IMR-90 (cell line): ENCODE measurements at regions of chr20 and their contacts with region 1.

Region 1: GRCh38 chr20:3786665-3787323 is at the start of gene CENPB:
- DNase-seq: peak; percentile 76
- ATAC-seq: peak; percentile 92
- H3K4me3 ChIP-seq: peak within 1 kb of the TSS; percentile 96
- H3K27ac ChIP-seq: peak within 1 kb of the TSS; percentile 92
- H3K4me1 ChIP-seq: peaks cover 16% of the 10 kb centered on the region
- H3K27me3 ChIP-seq: no peaks in the 10 kb centered on the region
- CTCF ChIP-seq: peak; percentile 88
- POLR2A ChIP-seq: no peak
- RAD21 ChIP-seq: peak; percentile 81
- total RNA-seq, gene CENPB: 59.1 and 72.2 TPM in 2 replicates

Region 2: GRCh38 chr20:3330046-3330741 is 456.6 kb before region 1 on chr20:
- CTCF ChIA-PET with region 1: no interaction called
- POLR2A ChIA-PET with region 1: no interaction called
- dilution Hi-C with region 1: no loop called
- in situ Hi-C with region 1: no loop called
- intact Hi-C with region 1: no loop called
- DNase-seq: peak; percentile 59
- ATAC-seq: peak; percentile 72; the same call in 1 of the 2 replicates
- H3K4me3 ChIP-seq: no peak overlapping the region
- H3K27ac ChIP-seq: no peak overlapping the region
- H3K4me1 ChIP-seq: no peaks in the 10 kb centered on the region
- H3K27me3 ChIP-seq: no peaks in the 10 kb centered on the region
- CTCF ChIP-seq: 0 out of 2 replicates have a peak, but pooled peaks have one; percentile 11
- POLR2A ChIP-seq: no peak
- RAD21 ChIP-seq: no peak

Region 3: DNA sequence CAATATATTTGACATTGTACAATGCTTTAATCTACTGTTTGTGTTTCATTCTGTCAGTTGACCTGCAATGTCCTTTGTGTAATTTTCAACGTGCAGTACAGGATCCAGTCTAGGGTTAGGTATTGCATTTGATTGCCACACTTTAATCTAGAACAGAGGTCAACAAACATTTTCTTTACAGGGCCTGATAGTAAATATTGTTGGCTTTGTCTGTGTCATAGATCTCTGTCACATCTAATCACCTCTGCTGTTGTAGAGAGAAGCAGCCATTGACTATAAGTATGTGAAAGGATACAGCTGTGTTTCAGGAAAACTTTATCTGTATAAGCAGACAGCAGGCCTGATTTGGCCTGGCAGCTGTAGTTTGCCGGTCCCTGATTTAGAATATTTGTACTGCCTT is 276.7 kb before region 1 on chr20:
- CTCF ChIA-PET with region 1: no interaction called
- POLR2A ChIA-PET with region 1: no interaction called
- dilution Hi-C with region 1: no loop called
- in situ Hi-C with region 1: no loop called
- intact Hi-C with region 1: no loop called
- DNase-seq: no peak
- ATAC-seq: no peak
- H3K4me3 ChIP-seq: no peak overlapping the region
- H3K27ac ChIP-seq: no peak overlapping the region
- H3K4me1 ChIP-seq: peaks cover 5% of the 10 kb centered on the region
- H3K27me3 ChIP-seq: no peaks in the 10 kb centered on the region
- CTCF ChIP-seq: no peak
- POLR2A ChIP-seq: no peak
- RAD21 ChIP-seq: no peak

Region 4: DNA sequence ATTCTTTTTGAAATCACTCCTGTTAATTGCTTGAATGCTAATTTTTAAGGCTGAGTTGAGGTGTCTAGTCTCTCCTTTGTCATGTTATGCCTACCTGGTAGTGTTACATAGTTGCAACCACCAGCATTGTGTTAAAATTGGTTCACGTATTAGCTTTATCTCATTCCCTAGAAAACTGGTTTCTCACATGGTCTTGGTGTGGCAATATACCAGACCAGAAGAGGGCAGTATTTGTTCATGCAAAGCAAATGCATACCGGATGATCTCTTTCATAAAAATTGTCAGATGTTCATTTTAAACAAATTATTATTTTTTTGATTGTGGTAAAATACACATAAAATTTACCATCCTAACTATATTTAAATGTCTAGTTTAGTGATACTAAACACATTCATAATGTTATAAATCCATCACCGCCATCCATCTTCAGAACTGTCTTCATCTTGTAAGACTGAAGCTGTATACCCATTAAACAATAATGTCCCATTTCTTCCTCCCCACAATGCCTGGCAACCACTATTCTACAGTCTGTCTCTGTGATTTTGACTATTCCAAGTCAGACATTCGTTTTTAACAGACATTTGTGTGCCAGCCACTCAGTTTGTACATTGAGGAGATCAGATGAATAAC is 223.1 kb before region 1 on chr20:
- CTCF ChIA-PET with region 1: no interaction called
- POLR2A ChIA-PET with region 1: no interaction called
- dilution Hi-C with region 1: no loop called
- in situ Hi-C with region 1: no loop called
- intact Hi-C with region 1: loop called (anchors 5 kb)
- DNase-seq: peak; percentile 69
- ATAC-seq: peak; percentile 89
- H3K4me3 ChIP-seq: no peak overlapping the region
- H3K27ac ChIP-seq: no peak overlapping the region
- H3K4me1 ChIP-seq: no peaks in the 10 kb centered on the region
- H3K27me3 ChIP-seq: no peaks in the 10 kb centered on the region
- CTCF ChIP-seq: peak; percentile 80
- POLR2A ChIP-seq: no peak
- RAD21 ChIP-seq: peak; percentile 78

Region 5: DNA sequence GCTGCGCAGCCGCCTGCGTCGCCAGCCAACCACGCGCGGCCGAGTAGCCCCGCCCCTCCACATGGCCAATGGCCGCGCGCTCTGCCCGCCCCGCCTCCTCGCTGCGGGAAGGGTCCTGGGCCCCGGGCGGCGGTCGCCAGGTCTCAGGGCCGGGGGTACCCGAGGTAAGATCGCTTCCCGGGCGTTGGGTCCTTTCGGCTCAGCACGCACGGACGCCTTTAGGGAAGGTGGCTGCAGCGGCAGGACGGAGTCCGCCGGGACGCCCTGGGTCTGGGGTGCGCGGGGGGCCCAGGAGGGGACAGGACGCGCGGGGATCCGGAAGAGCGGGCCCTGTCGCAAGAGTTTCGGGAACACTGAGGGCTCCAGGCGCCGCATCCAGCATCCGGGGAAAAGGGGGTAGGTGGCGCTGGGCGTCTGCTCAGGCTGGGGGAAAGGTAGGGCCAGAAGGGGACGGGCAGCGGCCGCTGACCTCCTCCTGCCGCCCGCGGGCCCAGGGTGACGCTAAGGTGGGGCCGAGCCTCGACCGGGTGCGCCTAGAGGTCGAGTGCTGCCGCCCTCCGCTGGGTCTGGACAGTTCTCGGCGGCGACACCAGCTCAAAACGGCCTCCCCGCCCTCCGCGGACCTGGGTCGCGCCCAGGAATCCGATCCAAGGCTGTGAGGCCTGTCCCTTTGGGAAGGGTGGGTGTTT is 60.1 kb after region 1 on chr20 and contains the start of gene MAVS:
- CTCF ChIA-PET with region 1: interaction called, 3 read pairs
- POLR2A ChIA-PET with region 1: interaction called, 3 read pairs
- dilution Hi-C with region 1: no loop called
- in situ Hi-C with region 1: no loop called
- intact Hi-C with region 1: loop called (anchors 2 kb)
- DNase-seq: peak; percentile 70
- ATAC-seq: peak; percentile 96
- H3K4me3 ChIP-seq: peak within 1 kb of the TSS; percentile 82
- H3K27ac ChIP-seq: peak within 1 kb of the TSS; percentile 83
- H3K4me1 ChIP-seq: peaks cover 8% of the 10 kb centered on the region
- H3K27me3 ChIP-seq: no peaks in the 10 kb centered on the region
- CTCF ChIP-seq: no peak
- POLR2A ChIP-seq: peak; percentile 82
- RAD21 ChIP-seq: no peak
- total RNA-seq, gene MAVS: 10.3 and 10.4 TPM in 2 replicates

Region 6: DNA sequence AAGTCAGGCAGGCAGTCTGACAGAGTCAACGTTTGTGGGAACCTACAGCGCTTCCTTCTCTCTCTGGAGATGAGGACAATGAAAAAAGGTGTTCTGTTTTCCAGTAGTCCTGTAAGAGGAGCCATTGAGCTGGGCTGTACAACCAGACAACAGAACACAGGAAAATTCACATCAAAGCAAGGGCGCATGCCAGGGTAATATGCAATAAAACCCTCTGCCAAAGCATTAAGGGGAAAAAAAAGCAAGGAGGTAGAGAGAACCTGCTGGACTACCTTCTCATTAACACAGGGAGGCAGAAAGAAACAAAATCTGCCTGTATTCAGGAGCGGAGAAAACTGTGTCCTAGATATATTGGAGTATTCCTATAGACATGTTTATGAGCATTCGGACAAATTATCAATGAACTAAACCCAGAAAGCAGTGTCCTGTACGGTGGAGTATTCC is 227.3 kb after region 1 on chr20:
- CTCF ChIA-PET with region 1: no interaction called
- POLR2A ChIA-PET with region 1: no interaction called
- dilution Hi-C with region 1: no loop called
- in situ Hi-C with region 1: no loop called
- intact Hi-C with region 1: loop called (anchors 2 kb)
- DNase-seq: peak; percentile 85
- ATAC-seq: peak; percentile 22
- H3K4me3 ChIP-seq: peak overlapping the region; percentile 99
- H3K27ac ChIP-seq: peak overlapping the region; percentile 61; the same call in 1 of the 2 replicates
- H3K4me1 ChIP-seq: peaks cover 13% of the 10 kb centered on the region
- H3K27me3 ChIP-seq: no peaks in the 10 kb centered on the region
- CTCF ChIP-seq: peak; percentile 79
- POLR2A ChIP-seq: 0 out of 2 replicates have a peak, but pooled peaks have one; percentile 28
- RAD21 ChIP-seq: peak; percentile 82

Region 7: GRCh38 chr20:4082406-4083097 is 295.8 kb after region 1 on chr20:
- CTCF ChIA-PET with region 1: no interaction called
- POLR2A ChIA-PET with region 1: no interaction called
- dilution Hi-C with region 1: no loop called
- in situ Hi-C with region 1: loop called (anchors 10 kb)
- intact Hi-C with region 1: no loop called
- DNase-seq: peak; percentile 82
- ATAC-seq: peak; percentile 40
- H3K4me3 ChIP-seq: peak overlapping the region; percentile 12; the same call in 1 of the 2 replicates
- H3K27ac ChIP-seq: peak overlapping the region; percentile 97
- H3K4me1 ChIP-seq: peaks cover 22% of the 10 kb centered on the region
- H3K27me3 ChIP-seq: no peaks in the 10 kb centered on the region
- CTCF ChIP-seq: no peak
- POLR2A ChIP-seq: no peak
- RAD21 ChIP-seq: no peak

Region 8: GRCh38 chr20:4108495-4109306 is 321.9 kb after region 1 on chr20:
- CTCF ChIA-PET with region 1: no interaction called
- POLR2A ChIA-PET with region 1: no interaction called
- dilution Hi-C with region 1: no loop called
- in situ Hi-C with region 1: no loop called
- intact Hi-C with region 1: no loop called
- DNase-seq: peak; percentile 88
- ATAC-seq: peak; percentile 97
- H3K4me3 ChIP-seq: no peak overlapping the region
- H3K27ac ChIP-seq: no peak overlapping the region
- H3K4me1 ChIP-seq: peaks cover 3% of the 10 kb centered on the region; the same call in 1 of the 2 replicates
- H3K27me3 ChIP-seq: no peaks in the 10 kb centered on the region
- CTCF ChIP-seq: peak; percentile 99
- POLR2A ChIP-seq: peak; percentile 58; the same call in 1 of the 2 replicates
- RAD21 ChIP-seq: peak; percentile 99